Activated naive CD4-positive, alpha-beta T cell treated with anti-CD3 and anti-CD28 coated beads for 36 hours (primary cell): ENCODE measurements at regions of chr11 and their contacts with region 1.

Region 1: GRCh38 chr11:8263769-8264410 is at the start of gene LMO1:
- DNase-seq: peak; percentile 86
- H3K4me3 Mint-ChIP-seq: peak within 1 kb of the TSS; percentile 38
- H3K27ac Mint-ChIP-seq: no peak within 1 kb of the TSS
- H3K4me1 Mint-ChIP-seq: peaks cover 13% of the 10 kb centered on the region
- H3K27me3 Mint-ChIP-seq: peaks cover 72% of the 10 kb centered on the region
- total RNA-seq, gene LMO1: not detected

Region 2: GRCh38 chr11:8192016-8192895 is 71.6 kb before region 1 on chr11:
- CTCF ChIA-PET with region 1: interaction called, 19 read pairs
- intact Hi-C with region 1: loop called (anchors 1 kb)
- DNase-seq: peak; percentile 68
- H3K4me3 Mint-ChIP-seq: no peak overlapping the region
- H3K27ac Mint-ChIP-seq: no peak overlapping the region
- H3K4me1 Mint-ChIP-seq: no peaks in the 10 kb centered on the region
- H3K27me3 Mint-ChIP-seq: peaks cover 25% of the 10 kb centered on the region

Region 3: DNA sequence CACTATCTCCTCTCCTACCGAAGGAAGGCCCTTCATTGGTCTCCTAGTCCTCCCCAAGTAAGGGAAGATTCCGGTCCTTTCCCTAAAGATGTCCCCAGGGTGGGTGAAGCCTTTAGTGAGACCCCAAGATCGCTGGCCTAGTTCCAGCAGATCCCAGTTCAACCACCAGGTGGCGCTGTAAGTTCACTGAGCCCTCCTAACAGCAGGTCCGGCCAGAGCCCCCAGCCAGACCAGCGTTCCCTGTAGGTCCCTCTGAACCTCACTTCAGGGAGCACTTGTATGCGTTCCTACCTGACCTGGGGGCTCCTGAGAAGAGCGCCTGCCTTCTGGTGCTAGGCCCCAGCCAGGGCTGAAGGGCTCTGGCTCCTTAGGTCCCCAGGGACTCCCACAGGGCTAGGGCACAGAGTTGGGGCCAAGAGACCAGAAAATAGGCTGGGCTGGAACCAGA is 38.3 kb before region 1 on chr11:
- CTCF ChIA-PET with region 1: interaction called, 11 read pairs
- intact Hi-C with region 1: loop called (anchors 1 kb)
- DNase-seq: peak; percentile 75
- H3K4me3 Mint-ChIP-seq: no peak overlapping the region
- H3K27ac Mint-ChIP-seq: no peak overlapping the region
- H3K4me1 Mint-ChIP-seq: no peaks in the 10 kb centered on the region
- H3K27me3 Mint-ChIP-seq: no peaks in the 10 kb centered on the region

Region 4: DNA sequence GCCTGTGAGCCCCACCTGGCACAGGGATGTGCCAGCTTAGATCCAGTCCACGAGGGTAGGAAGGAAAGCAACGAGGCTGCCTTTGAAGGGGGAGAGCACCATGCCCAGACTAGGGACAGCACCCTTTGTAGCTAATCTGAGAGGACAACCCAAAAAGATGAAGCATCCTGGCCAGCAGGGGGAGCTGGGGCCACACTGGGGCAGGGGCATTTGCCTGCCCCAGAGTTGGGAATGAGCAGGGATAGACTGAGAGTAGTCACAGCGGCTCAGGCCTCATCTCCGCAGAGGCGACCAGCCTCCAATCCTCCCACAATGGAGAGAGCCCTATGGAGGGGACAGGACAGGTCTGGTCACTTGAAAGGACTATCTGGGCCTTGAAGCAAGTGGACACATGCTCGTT is 16.6 kb before region 1 on chr11:
- CTCF ChIA-PET with region 1: interaction called, 9 read pairs
- intact Hi-C with region 1: loop called (anchors 1 kb)
- DNase-seq: peak; percentile 40
- H3K4me3 Mint-ChIP-seq: no peak overlapping the region
- H3K27ac Mint-ChIP-seq: no peak overlapping the region
- H3K4me1 Mint-ChIP-seq: no peaks in the 10 kb centered on the region
- H3K27me3 Mint-ChIP-seq: no peaks in the 10 kb centered on the region

Region 5: DNA sequence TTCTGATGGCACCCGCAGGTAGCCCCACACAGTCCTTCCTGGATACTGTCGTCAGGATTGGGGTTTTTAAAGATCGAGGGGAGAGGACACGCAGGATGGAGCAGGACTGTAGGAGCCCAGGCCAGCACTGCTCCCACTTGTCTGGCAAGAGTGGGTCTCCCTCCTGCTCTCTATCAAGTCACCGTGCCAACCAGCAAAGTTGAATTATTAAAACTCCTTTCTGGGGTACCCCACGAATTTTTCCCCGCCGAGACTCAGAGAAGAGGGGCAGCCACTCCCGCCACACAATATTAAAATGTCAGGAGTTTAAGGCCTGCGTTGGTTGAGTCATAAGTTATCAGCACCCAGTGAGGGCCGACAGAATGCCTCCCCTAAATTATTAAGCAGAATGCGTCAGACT is 10.3 kb before region 1 on chr11:
- CTCF ChIA-PET with region 1: interaction called, 16 read pairs
- intact Hi-C with region 1: no loop called
- DNase-seq: no peak
- H3K4me3 Mint-ChIP-seq: no peak overlapping the region
- H3K27ac Mint-ChIP-seq: no peak overlapping the region
- H3K4me1 Mint-ChIP-seq: no peaks in the 10 kb centered on the region
- H3K27me3 Mint-ChIP-seq: peaks cover 1% of the 10 kb centered on the region